Stomach (tissue), 19 donors: ENCODE measurements at regions of chr10 and their contacts with region 1.

Region 1: GRCh38 chr10:63866075-63866746 is 345.0 kb downstream of the REEP3 start:
- DNase-seq: peak; percentile 43 to 85
- H3K4me3 ChIP-seq: peak overlapping the region in 1 of 4 donors; percentile 7
- H3K27ac ChIP-seq: no peak overlapping the region
- H3K4me1 ChIP-seq: peaks cover 6 to 12% (median 10%) of the 10 kb centered on the region in 4 donors
- H3K27me3 ChIP-seq: peaks cover 0 to 20% (median 0%) of the 10 kb centered on the region in 3 donors
- CTCF ChIP-seq: peak in 5 of 7 experiments; percentile 30 to 74 (median 69)
- EP300 ChIP-seq: no peak
- POLR2A ChIP-seq: no peak

Region 2: GRCh38 chr10:63770519-63770918 is 95.7 kb before region 1 on chr10:
- intact Hi-C with region 1: no loop called
- DNase-seq: no peak
- H3K4me3 ChIP-seq: no peak overlapping the region
- H3K27ac ChIP-seq: no peak overlapping the region
- H3K4me1 ChIP-seq: peaks cover 0 to 13% (median 5%) of the 10 kb centered on the region in 4 donors
- H3K27me3 ChIP-seq: no peaks in the 10 kb centered on the region
- CTCF ChIP-seq: no peak
- EP300 ChIP-seq: no peak
- POLR2A ChIP-seq: no peak

Region 3: DNA sequence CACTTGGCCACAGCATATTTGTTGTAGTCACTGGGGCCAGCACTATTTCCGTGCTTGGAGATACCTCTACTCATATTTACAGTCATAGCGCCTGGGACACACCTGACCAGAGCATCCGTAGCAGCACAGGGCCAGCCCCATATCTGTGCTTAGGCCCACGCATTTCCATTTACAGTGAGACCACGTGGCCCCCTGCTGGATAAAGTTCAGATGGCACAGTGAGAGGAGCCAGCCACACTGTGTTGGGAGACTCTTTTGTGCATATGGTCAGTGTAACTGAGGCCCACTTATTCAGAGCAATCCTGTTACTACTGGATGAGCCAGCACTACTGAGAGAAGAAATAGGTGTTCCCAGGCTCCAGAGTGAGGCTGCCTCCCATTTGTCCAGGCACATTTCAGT is 110.3 kb after region 1 on chr10:
- intact Hi-C with region 1: loop called (anchors 5 kb)
- DNase-seq: peak; percentile 61 to 69
- H3K4me3 ChIP-seq: no peak overlapping the region
- H3K27ac ChIP-seq: no peak overlapping the region
- H3K4me1 ChIP-seq: no peaks in the 10 kb centered on the region
- H3K27me3 ChIP-seq: no peaks in the 10 kb centered on the region
- CTCF ChIP-seq: peak in 5 of 7 experiments; percentile 26 to 58 (median 45)
- EP300 ChIP-seq: no peak
- POLR2A ChIP-seq: no peak